H1 (cell line): ENCODE measurements at regions of chr17 and their contacts with region 1.

Region 1: GRCh38 chr17:7130621-7131422 is 16.2 kb upstream of the ASGR2 start:
- DNase-seq: no peak
- H3K4me3 ChIP-seq: no peak overlapping the region
- H3K27ac ChIP-seq: peak overlapping the region; percentile 64; the same call in 1 of the 2 replicates
- H3K4me1 ChIP-seq: peaks cover 10 to 30% (median 22%) of the 10 kb centered on the region in 4 experiments
- H3K27me3 ChIP-seq: no peaks in the 10 kb centered on the region; a peak in 1 of 7 replicates
- CTCF ChIP-seq: no peak
- EP300 ChIP-seq: no peak
- POLR2A ChIP-seq: peak in 1 of 2 experiments; percentile 40; a peak in 2 of 3 replicates
- RAD21 ChIP-seq: no peak

Region 2: GRCh38 chr17:7004398-7005253 is 126.2 kb before region 1 on chr17:
- CTCF ChIA-PET with region 1: no interaction called
- POLR2A ChIA-PET with region 1: no interaction called
- DNase-seq: peak in 1 of 2 experiments; percentile 53
- H3K4me3 ChIP-seq: no peak overlapping the region
- H3K27ac ChIP-seq: no peak overlapping the region
- H3K4me1 ChIP-seq: no peaks in the 10 kb centered on the region
- H3K27me3 ChIP-seq: no peaks in the 10 kb centered on the region
- CTCF ChIP-seq: peak in 2 of 3 experiments; percentile 70; a peak in 3 of 4 replicates
- EP300 ChIP-seq: no peak
- POLR2A ChIP-seq: no peak
- RAD21 ChIP-seq: peak; percentile 82 to 88

Region 3: GRCh38 chr17:7056386-7056785 is 74.4 kb before region 1 on chr17:
- CTCF ChIA-PET with region 1: interaction called, 434 read pairs
- POLR2A ChIA-PET with region 1: interaction called, 5 read pairs
- DNase-seq: no peak
- H3K4me3 ChIP-seq: no peak overlapping the region
- H3K27ac ChIP-seq: no peak overlapping the region
- H3K4me1 ChIP-seq: no peaks in the 10 kb centered on the region; a peak in 1 of 7 replicates
- H3K27me3 ChIP-seq: no peaks in the 10 kb centered on the region
- CTCF ChIP-seq: no peak
- EP300 ChIP-seq: no peak
- POLR2A ChIP-seq: no peak
- RAD21 ChIP-seq: no peak